Activated CD8-positive, alpha-beta T cell treated with anti-CD3 and anti-CD28 coated beads for 36 hours (primary cell): ENCODE measurements at regions of chr1 and their contacts with region 1.

Region 1: GRCh38 chr1:169367486-169368405 is at the starts of genes BLZF1 and NME7:
- DNase-seq: peak; percentile 99
- ATAC-seq: peak; percentile 93
- H3K4me3 Mint-ChIP-seq: no peak within 1 kb of the TSS
- H3K27ac Mint-ChIP-seq: no peak within 1 kb of the TSS
- H3K4me1 Mint-ChIP-seq: peaks cover 39% of the 10 kb centered on the region
- H3K27me3 Mint-ChIP-seq: no peaks in the 10 kb centered on the region
- CTCF ChIP-seq: no peak
- total RNA-seq, gene BLZF1: 9.8 to 10.1 TPM
- total RNA-seq, gene NME7: 15.3 to 17.4 TPM

Region 2: GRCh38 chr1:169106095-169106920 is 261.4 kb before region 1 on chr1 and contains the start of gene ATP1B1:
- CTCF ChIA-PET with region 1: no interaction called
- POLR2A ChIA-PET with region 1: no interaction called
- intact Hi-C with region 1: loop called (anchors 10 kb)
- DNase-seq: peak; percentile 82
- ATAC-seq: peak; percentile 95
- H3K4me3 Mint-ChIP-seq: peak within 1 kb of the TSS; percentile 72
- H3K27ac Mint-ChIP-seq: peak within 1 kb of the TSS; percentile 69
- H3K4me1 Mint-ChIP-seq: peaks cover 35% of the 10 kb centered on the region
- H3K27me3 Mint-ChIP-seq: peaks cover 7% of the 10 kb centered on the region
- CTCF ChIP-seq: no peak
- total RNA-seq, gene ATP1B1: 3.1 to 3.7 TPM

Region 3: GRCh38 chr1:169348383-169349036 is 19.2 kb before region 1 on chr1:
- CTCF ChIA-PET with region 1: interaction called, 42 read pairs
- POLR2A ChIA-PET with region 1: no interaction called
- intact Hi-C with region 1: no loop called
- DNase-seq: no peak
- ATAC-seq: no peak
- H3K4me3 Mint-ChIP-seq: no peak overlapping the region
- H3K27ac Mint-ChIP-seq: no peak overlapping the region
- H3K4me1 Mint-ChIP-seq: peaks cover 20% of the 10 kb centered on the region
- H3K27me3 Mint-ChIP-seq: no peaks in the 10 kb centered on the region
- CTCF ChIP-seq: peak; percentile 96

Region 4: GRCh38 chr1:169485544-169486278 is 118.0 kb after region 1 on chr1 and contains the start of gene SLC19A2:
- CTCF ChIA-PET with region 1: no interaction called
- POLR2A ChIA-PET with region 1: interaction called, 4 read pairs
- intact Hi-C with region 1: loop called (anchors 5 kb)
- DNase-seq: peak; percentile 96
- ATAC-seq: peak; percentile 99
- H3K4me3 Mint-ChIP-seq: peak within 1 kb of the TSS; percentile 87
- H3K27ac Mint-ChIP-seq: peak within 1 kb of the TSS; percentile 92
- H3K4me1 Mint-ChIP-seq: peaks cover 52% of the 10 kb centered on the region
- H3K27me3 Mint-ChIP-seq: no peaks in the 10 kb centered on the region
- CTCF ChIP-seq: peak; percentile 11
- total RNA-seq, gene SLC19A2: 5.7 to 6.4 TPM

Region 5: GRCh38 chr1:169610108-169610507 is 242.4 kb after region 1 on chr1:
- CTCF ChIA-PET with region 1: no interaction called
- POLR2A ChIA-PET with region 1: no interaction called
- intact Hi-C with region 1: no loop called
- DNase-seq: no peak
- ATAC-seq: no peak
- H3K4me3 Mint-ChIP-seq: no peak overlapping the region
- H3K27ac Mint-ChIP-seq: no peak overlapping the region
- H3K4me1 Mint-ChIP-seq: peaks cover 15% of the 10 kb centered on the region
- H3K27me3 Mint-ChIP-seq: no peaks in the 10 kb centered on the region
- CTCF ChIP-seq: no peak

Region 6: GRCh38 chr1:169694304-169695075 is 326.7 kb after region 1 on chr1:
- CTCF ChIA-PET with region 1: no interaction called
- POLR2A ChIA-PET with region 1: no interaction called
- intact Hi-C with region 1: loop called (anchors 10 kb)
- DNase-seq: peak; percentile 58
- ATAC-seq: peak; percentile 39
- H3K4me3 Mint-ChIP-seq: peak overlapping the region; percentile 2
- H3K27ac Mint-ChIP-seq: peak overlapping the region; percentile 88
- H3K4me1 Mint-ChIP-seq: peaks cover 91% of the 10 kb centered on the region
- H3K27me3 Mint-ChIP-seq: no peaks in the 10 kb centered on the region
- CTCF ChIP-seq: peak; percentile 55